Gastrocnemius medialis (tissue), 4 donors: ENCODE measurements at regions of chr10 and their contacts with region 1.

Region 1: DNA sequence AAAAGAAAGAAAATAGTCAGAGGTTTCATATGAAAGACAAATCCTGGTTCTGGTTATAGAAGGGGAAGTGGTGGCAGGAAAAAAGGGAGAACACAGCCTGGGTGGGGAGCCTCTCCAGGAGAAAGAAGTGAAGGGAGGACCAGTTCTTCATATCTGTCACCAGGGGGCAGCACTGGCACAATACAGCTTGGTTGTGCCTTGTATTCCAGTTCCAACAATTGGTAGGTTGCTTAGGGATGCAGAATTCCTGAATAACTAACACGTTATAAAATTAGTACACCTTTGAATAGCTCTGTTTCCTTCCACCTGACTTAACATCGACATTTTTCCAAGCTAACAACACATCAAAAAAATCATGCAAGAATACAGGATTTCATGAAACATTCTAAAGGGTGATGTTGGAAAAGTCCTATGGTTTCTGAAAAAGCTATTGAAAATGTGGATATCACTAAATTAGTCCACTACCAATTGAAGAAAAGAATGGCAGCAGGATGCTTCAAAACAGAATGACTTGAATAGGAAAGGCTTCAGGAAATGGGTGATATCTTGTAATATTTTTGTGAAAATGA is 52.9 kb downstream of the CYP26A1 start:
- DNase-seq: no peak
- ATAC-seq: no peak
- H3K4me3 ChIP-seq: no peak overlapping the region
- H3K27ac ChIP-seq: no peak overlapping the region
- H3K4me1 ChIP-seq: no peaks in the 10 kb centered on the region
- H3K27me3 ChIP-seq: no peaks in the 10 kb centered on the region
- CTCF ChIP-seq: no peak
- POLR2A ChIP-seq: no peak

Region 2: DNA sequence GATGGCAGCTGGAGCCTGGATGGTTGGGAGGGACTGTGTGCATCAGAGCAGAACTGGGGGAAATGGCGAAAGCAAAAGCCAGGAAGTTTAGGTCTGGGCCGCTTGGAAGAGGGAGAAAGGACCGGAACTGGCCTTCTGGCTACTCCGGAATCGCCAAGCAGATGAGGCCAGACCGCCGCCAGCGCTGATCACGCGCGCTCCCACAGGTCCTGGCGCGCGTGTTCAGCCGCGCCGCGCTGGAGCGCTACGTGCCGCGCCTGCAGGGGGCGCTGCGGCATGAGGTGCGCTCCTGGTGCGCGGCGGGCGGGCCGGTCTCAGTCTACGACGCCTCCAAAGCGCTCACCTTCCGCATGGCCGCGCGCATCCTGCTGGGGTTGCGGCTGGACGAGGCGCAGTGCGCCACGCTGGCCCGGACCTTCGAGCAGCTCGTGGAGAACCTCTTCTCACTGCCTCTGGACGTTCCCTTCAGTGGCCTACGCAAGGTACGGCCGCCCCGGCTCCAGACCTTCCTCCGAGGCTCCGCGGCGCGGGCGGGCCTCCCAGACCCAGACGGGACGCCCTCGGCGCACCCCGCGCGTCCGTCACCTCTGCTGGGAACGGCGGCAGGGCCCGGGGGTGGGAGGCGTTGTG is 63.9 kb before region 1 on chr10:
- in situ Hi-C with region 1: no loop called
- intact Hi-C with region 1: no loop called
- DNase-seq: no peak
- ATAC-seq: peak in 1 of 2 donors; percentile 35
- H3K4me3 ChIP-seq: peak overlapping the region in 3 of 4 donors; percentile 33 to 42 (median 37)
- H3K27ac ChIP-seq: no peak overlapping the region
- H3K4me1 ChIP-seq: peaks cover 0 to 3% of the 10 kb centered on the region in 2 donors
- H3K27me3 ChIP-seq: peaks cover 14 to 22% (median 21%) of the 10 kb centered on the region in 3 donors
- CTCF ChIP-seq: peak in 4 of 5 experiments; percentile 5 to 51 (median 30)
- POLR2A ChIP-seq: no peak

Region 3: DNA sequence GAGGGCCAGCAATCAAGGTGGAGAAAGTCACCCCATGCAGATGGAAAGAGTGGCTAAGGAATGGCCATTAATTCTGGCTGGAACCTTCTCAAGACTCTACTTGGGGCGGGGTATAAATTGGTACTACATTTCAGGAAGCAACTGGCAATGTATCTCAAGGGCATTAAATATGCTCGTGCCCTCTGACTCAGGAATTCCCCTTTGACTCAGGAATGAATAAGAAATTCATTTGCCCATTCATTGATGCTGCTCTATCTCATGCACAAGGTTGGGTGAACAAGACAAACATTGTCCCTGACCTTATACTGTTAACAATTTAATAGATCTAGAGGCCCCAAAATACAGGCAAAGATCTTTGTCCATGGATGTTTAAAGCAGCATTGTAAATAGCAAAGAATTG is 167.4 kb after region 1 on chr10:
- in situ Hi-C with region 1: loop called in 3 of 4 experiments (anchors 10 to 25 kb)
- intact Hi-C with region 1: no loop called
- DNase-seq: no peak
- ATAC-seq: no peak
- H3K4me3 ChIP-seq: no peak overlapping the region
- H3K27ac ChIP-seq: no peak overlapping the region
- H3K4me1 ChIP-seq: no peaks in the 10 kb centered on the region
- H3K27me3 ChIP-seq: no peaks in the 10 kb centered on the region
- CTCF ChIP-seq: no peak
- POLR2A ChIP-seq: no peak